ENCODE measurements at regions of chr4 and their contacts with region 1.

Region 1: DNA sequence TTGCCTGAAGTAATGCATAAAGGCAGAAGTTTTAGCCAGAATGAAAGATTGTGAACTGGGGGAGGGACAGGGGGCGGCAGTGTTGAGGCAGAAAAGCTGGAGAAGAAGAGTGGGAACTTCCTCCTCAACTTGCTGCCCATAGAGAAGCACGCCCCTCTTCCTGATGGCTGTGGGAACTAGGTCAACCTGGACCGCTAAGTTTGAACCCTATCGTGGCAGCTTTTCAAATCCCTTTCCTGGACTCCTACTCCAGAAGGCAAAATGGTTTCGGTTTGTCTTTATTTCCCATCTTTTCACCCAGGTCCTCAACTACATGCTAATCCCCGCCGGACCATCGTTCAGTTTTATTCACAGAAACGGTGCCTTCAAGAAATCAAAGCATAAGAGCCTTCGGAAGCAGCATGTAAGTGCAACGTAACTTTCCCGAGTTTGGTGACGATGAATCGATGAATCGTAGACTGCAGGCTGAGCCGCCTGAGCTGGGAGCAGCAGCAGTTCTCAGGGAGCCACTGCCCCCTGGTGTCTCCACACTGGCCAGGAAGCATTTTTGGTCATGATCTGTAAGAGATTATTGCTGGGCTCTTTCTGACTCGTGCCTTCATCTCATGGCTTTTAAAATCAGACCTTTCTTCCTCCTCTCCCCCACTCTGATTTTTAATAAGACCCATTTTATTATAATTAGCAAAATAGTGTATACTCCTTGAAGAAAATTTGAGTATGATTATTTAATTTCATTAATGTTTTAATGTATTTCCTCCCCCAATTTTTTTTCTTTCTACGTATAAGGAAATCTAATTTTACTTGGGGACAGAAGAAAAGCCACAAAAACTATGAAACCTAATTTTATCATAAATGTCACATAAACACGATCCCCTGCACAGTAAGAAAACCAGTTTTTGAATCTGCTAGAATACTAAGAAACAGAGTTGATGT is 21.4 kb downstream of the SPINK2 start:
- DNase-seq: peak; percentile 71 to 98 (median 88)

Region 2: DNA sequence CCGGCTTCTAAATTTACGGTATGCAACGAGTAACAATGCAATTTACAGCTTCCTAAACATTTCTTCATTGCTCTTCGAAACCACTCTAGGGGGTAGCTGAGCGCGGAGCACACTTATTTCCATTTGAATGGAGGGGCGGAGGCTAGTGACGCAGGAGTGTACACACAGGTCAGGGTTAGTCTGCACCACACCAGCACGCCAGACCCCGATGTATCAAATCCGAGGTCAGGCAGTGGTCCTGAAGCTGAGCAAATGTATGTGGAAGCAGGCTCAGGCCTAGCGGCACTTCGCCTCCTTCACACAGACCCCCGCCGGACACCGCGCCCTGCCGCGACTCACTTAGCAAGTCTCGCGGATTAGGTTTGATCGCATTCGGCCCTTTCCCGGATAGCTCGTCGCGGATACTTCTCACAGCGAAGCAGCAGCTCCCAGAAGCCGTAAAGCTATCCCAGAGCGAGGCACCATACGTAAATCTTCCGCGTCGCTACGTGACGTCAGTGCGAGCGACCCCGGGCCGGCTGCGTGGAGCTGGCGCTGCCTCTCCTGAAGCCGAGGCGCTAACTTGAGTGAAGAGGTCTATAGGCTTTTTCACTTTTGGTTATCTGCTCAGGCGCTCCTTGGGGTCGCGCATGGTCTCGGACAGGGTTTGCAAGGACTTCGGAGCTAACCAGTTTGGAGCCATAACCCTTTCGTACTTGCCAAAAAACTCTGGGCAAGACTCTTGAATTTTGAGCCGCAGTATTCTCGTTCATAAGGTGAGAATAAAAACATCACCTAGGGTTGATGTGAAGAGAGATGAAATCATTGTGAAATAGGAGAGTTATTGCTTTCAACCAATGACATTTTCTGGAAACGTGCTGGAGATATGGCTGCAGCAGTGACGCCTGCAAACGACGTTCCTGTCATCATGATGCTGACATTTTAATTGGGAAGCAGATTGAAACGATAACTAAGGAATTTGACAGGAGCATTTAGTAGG is 412.8 kb before region 1 on chr4 and contains the start of gene AASDH:
- intact Hi-C with region 1: no loop called
- DNase-seq: peak; percentile 89 to 99 (median 94)

Region 3: GRCh38 chr4:56424697-56425514 is 375.2 kb before region 1 on chr4:
- intact Hi-C with region 1: loop called (anchors 2 kb)
- DNase-seq: peak in 1 of 10 donors; percentile 30

Region 4: GRCh38 chr4:56544573-56545131 is 255.4 kb before region 1 on chr4:
- intact Hi-C with region 1: loop called (anchors 10 kb)
- DNase-seq: peak; percentile 80 to 98 (median 90)

Region 5: DNA sequence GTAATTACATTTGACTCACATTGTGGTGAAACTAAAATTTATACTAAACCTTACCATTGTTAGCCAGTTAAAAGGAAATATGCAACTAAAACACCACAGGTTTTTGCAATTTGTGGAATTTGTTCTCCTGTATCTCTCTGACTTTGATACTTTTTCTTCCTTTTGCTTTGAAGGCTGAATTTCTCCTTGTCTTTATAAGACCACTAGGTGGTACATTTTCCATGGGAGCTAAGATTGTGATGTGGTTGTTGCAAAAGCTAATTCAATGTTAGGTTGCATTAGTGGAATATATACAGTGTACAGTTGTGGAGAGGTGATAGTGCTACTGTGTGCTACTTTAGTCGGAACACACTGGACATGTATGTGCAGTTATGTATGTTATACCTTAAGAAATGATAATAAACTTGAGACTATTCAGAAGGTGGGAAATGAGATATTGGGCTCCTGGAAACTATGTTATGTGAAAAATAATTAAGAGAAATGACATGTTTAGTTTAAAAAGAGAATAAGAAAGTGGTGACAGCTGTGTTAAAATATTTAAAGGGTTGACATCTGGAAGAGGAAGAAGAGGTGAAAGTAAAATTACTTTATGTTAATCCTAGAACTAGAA is 224.2 kb before region 1 on chr4:
- intact Hi-C with region 1: loop called (anchors 1 kb)
- DNase-seq: no peak

Region 6: GRCh38 chr4:56655209-56655626 is 144.9 kb before region 1 on chr4:
- intact Hi-C with region 1: loop called (anchors 10 kb)
- DNase-seq: peak in 9 of 10 donors; percentile 28 to 94 (median 60)

Measured in posterior cingulate gyrus (tissue), 11 donors.